BJ (cell line): ENCODE measurements at regions of chr22 and their contacts with region 1.

Region 1: DNA sequence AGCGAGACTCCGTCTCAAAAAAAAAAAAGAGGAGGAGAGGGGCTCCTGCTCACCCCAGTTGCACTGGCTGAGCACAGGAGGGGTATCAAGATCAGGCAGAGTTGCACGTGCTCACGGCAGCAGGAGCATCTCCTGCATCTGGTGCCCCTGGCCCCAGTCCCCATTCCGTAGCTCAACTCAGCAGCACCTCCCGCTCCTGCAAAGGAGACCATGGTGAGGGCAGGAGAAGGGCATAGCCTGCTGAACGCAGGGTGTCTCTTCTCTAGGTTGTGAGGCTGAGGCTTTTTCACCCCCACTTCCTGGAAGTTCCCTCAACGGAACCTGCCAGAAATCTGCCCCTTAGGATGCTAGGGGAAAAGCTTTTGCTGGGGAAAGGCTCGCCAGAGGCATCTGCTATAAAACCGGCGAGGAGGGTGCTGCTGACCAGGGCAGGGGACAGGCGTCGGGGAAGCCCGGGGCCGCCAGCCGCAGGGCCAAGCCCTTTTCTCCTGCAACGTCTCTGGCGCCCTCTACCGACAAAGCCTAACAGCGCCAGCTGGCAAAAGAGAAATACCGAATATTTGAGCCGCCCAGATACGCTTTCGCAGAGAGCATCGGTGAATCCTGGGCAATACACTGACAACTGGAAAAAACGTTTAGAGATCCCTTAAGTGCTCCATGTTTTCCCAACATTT is 1.0 kb upstream of the PPP6R2 start:
- DNase-seq: no peak
- H3K4me3 ChIP-seq: peak overlapping the region; percentile 81
- H3K27me3 ChIP-seq: no peaks in the 10 kb centered on the region
- CTCF ChIP-seq: peak; percentile 98

Region 2: GRCh38 chr22:50244420-50245213 is 97.5 kb before region 1 on chr22 and contains the start of gene TUBGCP6:
- CTCF ChIA-PET with region 1: interaction called, 50 read pairs
- POLR2A ChIA-PET with region 1: no interaction called
- DNase-seq: no peak
- H3K4me3 ChIP-seq: peak within 1 kb of the TSS; percentile 81
- H3K27me3 ChIP-seq: no peaks in the 10 kb centered on the region
- CTCF ChIP-seq: no peak
- polyA plus RNA-seq, gene TUBGCP6: 9.4 and 17.5 TPM in 2 replicates

Region 3: GRCh38 chr22:50250555-50251476 is 91.3 kb before region 1 on chr22 and contains the start of gene HDAC10:
- CTCF ChIA-PET with region 1: interaction called, 50 read pairs
- POLR2A ChIA-PET with region 1: no interaction called
- DNase-seq: no peak
- H3K4me3 ChIP-seq: peak within 1 kb of the TSS; percentile 65
- H3K27me3 ChIP-seq: no peaks in the 10 kb centered on the region
- CTCF ChIP-seq: no peak
- polyA plus RNA-seq, gene HDAC10: 8.8 and 18.2 TPM in 2 replicates

Region 4: GRCh38 chr22:50267591-50268390 is 74.3 kb before region 1 on chr22:
- CTCF ChIA-PET with region 1: interaction called, 16 read pairs
- POLR2A ChIA-PET with region 1: no interaction called
- DNase-seq: no peak
- H3K4me3 ChIP-seq: peak overlapping the region; percentile 39
- H3K27me3 ChIP-seq: no peaks in the 10 kb centered on the region
- CTCF ChIP-seq: 0 out of 2 replicates have a peak, but pooled peaks have one; percentile 24

Region 5: GRCh38 chr22:50435291-50436014 is 93.3 kb after region 1 on chr22:
- CTCF ChIA-PET with region 1: no interaction called
- POLR2A ChIA-PET with region 1: no interaction called
- DNase-seq: no peak
- H3K4me3 ChIP-seq: no peak overlapping the region
- H3K27me3 ChIP-seq: no peaks in the 10 kb centered on the region
- CTCF ChIP-seq: no peak